ENCODE measurements at regions of chr2 and their contacts with region 1.

Region 1: DNA sequence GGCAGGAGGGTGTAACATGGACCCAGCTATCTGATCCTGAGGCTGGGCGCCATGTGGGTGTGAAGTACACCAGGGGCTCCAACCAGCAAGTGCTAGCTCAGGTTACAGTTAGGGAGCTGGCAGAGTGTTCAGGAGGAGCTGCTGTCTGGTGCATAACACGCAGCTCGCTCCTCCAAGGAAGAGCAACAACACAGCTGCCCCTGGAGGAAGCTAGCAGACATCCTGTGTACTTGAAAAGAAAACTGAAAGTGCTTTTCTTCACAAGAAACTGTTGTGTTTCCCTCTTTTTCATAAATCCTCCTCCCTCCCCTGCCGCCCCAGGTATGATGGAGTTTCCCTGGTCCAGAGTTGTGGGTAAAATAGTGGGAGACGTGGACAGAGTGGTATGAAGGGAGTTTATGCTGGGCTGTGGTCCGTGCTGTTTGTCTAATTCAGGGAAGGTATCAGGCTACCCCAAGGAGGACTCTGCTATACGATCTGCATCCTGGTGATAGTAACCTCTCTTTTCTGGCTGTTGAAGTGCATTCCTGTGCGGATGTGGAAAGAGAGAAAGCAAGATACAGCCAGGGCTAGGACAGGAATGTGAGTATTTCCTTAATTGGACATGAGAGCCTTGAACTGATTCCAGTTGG is 6.1 kb upstream of the LBH start:
- DNase-seq: peak; percentile 66
- H3K4me3 Mint-ChIP-seq: peak overlapping the region; percentile 95
- H3K27ac Mint-ChIP-seq: peak overlapping the region; percentile 100
- H3K4me1 Mint-ChIP-seq: peaks cover 67% of the 10 kb centered on the region
- H3K27me3 Mint-ChIP-seq: peaks cover 6% of the 10 kb centered on the region

Region 2: DNA sequence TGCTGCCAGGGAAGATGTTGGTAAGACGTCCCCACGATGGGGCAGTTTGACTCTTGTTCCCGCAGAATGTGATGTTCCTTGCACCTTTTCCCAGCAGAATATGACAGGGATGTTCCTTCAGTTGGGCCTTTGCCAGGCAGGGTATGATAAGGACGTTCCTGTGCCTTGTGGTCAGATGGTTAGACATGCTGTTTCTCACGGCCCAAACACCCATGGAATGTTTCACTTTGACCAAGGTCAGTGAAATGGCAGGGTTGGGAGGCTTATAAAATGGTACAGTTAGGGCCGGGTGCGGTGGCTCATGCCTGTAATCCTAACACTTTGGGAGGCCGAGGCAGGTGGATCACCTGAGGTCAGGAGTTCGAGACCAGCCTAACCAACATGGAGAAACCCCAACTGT is 118.7 kb before region 1 on chr2:
- CTCF ChIA-PET with region 1: no interaction called
- POLR2A ChIA-PET with region 1: no interaction called
- DNase-seq: no peak
- H3K4me3 Mint-ChIP-seq: no peak overlapping the region
- H3K27ac Mint-ChIP-seq: no peak overlapping the region
- H3K4me1 Mint-ChIP-seq: no peaks in the 10 kb centered on the region
- H3K27me3 Mint-ChIP-seq: peaks cover 5% of the 10 kb centered on the region

Region 3: DNA sequence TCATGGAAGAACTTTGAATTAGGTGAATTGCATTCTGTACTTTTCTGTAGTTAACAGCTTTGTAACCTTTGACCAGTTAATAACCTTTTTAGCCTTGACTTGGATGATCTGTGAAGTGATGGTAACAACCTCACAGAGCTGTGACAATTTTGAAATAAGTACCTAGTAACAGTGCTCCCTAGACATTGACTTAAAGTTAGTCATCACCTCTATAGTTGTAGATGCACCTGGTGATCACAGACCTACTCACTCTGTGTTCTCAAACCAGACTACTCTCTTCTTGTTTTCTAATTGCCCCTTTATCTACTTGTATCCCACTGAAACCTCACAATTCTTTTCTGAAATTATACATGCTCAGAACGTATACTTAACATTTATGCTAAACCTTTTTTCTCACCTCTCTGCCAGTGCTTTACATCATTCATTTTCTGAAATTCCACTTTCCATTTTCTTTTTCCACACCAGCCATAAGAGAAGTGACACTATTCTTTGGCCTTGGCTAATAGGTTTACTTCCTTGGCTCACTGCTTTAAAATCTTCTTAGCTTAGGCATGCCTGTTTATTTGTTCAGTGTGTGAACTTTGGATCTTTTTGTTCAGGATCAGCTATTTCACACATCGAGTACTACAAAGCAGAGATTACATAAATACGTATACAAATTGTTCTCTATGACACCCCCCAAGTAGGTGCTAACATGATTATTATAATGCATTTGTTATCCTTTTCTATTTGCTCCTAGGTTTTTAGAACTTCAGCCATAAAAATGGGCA is 69.2 kb before region 1 on chr2:
- CTCF ChIA-PET with region 1: no interaction called
- POLR2A ChIA-PET with region 1: no interaction called
- DNase-seq: no peak
- H3K4me3 Mint-ChIP-seq: no peak overlapping the region
- H3K27ac Mint-ChIP-seq: peak overlapping the region; percentile 6
- H3K4me1 Mint-ChIP-seq: peaks cover 13% of the 10 kb centered on the region
- H3K27me3 Mint-ChIP-seq: no peaks in the 10 kb centered on the region

Region 4: GRCh38 chr2:30208452-30208851 is 16.8 kb before region 1 on chr2:
- CTCF ChIA-PET with region 1: interaction called, 10 read pairs
- POLR2A ChIA-PET with region 1: interaction called, 3 read pairs
- DNase-seq: peak; percentile 42
- H3K4me3 Mint-ChIP-seq: no peak overlapping the region
- H3K27ac Mint-ChIP-seq: peak overlapping the region; percentile 68
- H3K4me1 Mint-ChIP-seq: peaks cover 20% of the 10 kb centered on the region
- H3K27me3 Mint-ChIP-seq: peaks cover 3% of the 10 kb centered on the region

Region 5: GRCh38 chr2:30321466-30321865 is 96.2 kb after region 1 on chr2:
- CTCF ChIA-PET with region 1: no interaction called
- POLR2A ChIA-PET with region 1: no interaction called
- DNase-seq: no peak
- H3K4me3 Mint-ChIP-seq: no peak overlapping the region
- H3K27ac Mint-ChIP-seq: no peak overlapping the region
- H3K4me1 Mint-ChIP-seq: peaks cover 19% of the 10 kb centered on the region
- H3K27me3 Mint-ChIP-seq: no peaks in the 10 kb centered on the region

Measured in activated CD4-positive, alpha-beta T cell treated with anti-CD3 and anti-CD28 coated beads, Interleukin-2, amount 10 ng/mL, durations not matched to agents 7 days and 5 days (primary cell).